Astrocyte of the cerebellum (primary cell): ENCODE measurements at regions of chr10 and their contacts with region 1.

Region 1: DNA sequence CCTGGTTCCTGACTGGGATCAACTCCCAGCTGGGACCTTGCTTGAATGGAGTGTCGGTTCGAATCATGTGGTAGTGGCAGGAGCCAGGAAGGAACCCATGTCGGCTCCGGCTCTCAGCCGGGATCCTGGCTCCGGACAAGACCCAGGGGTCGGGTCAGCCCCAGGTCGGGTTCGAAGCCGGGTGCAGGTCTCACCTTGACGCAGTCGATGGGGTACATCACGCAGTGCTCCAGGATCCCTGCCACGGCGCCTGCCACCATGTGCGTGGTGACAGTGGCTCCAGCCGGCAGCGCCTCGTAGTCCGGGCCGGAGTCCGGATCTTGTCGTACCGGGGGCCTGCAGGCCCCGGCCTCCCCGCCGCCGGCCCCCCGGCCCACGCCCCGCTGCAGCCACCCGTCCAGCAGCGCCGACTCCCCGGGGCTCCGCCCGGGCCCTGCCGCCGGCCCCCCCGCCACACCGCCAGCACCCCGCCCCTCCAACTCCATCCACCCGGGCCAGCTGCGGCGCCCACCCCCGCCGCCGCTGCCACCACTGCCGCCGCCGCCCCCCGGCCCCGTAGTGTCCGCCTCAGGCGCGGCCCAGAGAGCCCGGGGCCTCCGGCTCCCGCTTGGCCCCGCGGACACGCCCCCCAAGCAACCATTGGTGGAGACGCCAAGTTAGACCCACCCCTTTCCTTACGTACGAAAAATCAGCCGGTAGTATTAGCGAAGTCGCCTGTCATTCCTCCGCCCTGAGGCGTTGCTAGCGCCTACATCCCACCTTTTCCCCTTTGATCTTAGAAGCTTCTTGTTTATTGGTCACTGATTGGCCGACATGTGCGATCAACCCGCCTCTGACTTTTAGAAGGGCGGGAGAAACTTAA is at the start of gene SLC25A28:
- DNase-seq: peak; percentile 100
- H3K4me3 ChIP-seq: peak within 1 kb of the TSS; percentile 65
- CTCF ChIP-seq: no peak

Region 2: DNA sequence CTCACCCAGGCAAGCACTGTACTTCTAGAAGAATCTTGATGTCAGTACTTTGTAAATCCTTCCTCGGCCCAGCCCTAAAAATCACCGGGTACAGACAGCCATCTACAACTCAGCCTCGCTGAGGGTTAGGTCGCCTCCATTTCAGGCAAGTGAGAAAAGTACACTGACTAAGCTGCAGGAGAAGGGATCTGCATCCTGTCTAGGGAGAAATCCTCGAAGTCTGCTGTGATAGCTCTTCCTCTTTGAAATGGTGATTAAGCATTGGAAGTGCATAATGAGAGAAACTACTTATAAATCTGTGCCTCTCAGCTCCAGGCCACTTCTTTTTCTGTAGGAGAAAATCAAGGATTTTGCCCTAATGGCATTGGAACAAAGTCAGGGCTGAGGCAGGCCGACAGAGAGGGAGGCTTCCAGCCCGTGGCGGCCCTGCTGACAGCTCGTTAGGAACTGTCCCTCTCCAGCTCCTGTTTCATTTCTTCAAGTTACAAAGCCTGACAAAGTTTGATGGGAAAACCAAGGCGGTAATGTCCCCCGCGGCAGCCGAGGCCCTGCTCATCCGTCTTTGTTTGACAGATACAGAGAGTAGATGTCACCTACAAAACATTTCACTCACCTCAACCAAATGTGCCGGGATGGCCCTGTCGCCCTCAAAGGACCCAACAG is 175.6 kb before region 1 on chr10:
- in situ Hi-C with region 1: loop called (anchors 5 kb)
- DNase-seq: no peak
- H3K4me3 ChIP-seq: no peak overlapping the region
- CTCF ChIP-seq: no peak

Region 3: GRCh38 chr10:99530108-99531025 is 89.7 kb before region 1 on chr10:
- in situ Hi-C with region 1: no loop called
- DNase-seq: no peak
- H3K4me3 ChIP-seq: no peak overlapping the region
- CTCF ChIP-seq: no peak

Region 4: GRCh38 chr10:99551158-99551557 is 68.9 kb before region 1 on chr10:
- in situ Hi-C with region 1: no loop called
- DNase-seq: no peak
- H3K4me3 ChIP-seq: no peak overlapping the region
- CTCF ChIP-seq: no peak